ENCODE measurements at regions of chr6 and their contacts with region 1.

Region 1: GRCh38 chr6:46781478-46782378 is 11.5 kb upstream of the MEP1A start:
- ATAC-seq: peak in 4 of 8 experiments; percentile 45 to 84 (median 59)
- H3K4me3 ChIP-seq: no peak overlapping the region
- H3K27ac ChIP-seq: no peak overlapping the region
- H3K4me1 ChIP-seq: no peaks in the 10 kb centered on the region

Region 2: DNA sequence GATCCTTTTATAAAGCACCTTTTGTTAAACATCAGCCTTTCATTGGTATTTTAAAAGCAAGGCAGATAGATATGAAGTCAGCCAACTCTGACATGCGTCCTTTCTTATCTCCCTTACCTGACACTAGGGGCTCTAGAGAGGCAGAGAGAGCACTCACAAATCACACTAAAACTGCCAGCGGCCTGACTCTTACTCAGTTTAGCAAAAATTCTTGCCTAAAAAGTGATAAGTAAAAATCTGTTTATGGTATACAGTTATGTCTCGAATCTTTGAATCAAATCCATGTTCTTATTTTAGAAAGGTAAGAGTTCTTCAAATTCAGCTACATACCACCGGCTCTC is 104.4 kb before region 1 on chr6:
- in situ Hi-C with region 1: loop called in 1 of 9 experiments (anchors 25 kb)
- ATAC-seq: peak in 2 of 8 experiments; percentile 25 to 39
- H3K4me3 ChIP-seq: no peak overlapping the region
- H3K27ac ChIP-seq: no peak overlapping the region
- H3K4me1 ChIP-seq: no peaks in the 10 kb centered on the region